ENCODE measurements at regions of chr11 and their contacts with region 1.

Region 1: DNA sequence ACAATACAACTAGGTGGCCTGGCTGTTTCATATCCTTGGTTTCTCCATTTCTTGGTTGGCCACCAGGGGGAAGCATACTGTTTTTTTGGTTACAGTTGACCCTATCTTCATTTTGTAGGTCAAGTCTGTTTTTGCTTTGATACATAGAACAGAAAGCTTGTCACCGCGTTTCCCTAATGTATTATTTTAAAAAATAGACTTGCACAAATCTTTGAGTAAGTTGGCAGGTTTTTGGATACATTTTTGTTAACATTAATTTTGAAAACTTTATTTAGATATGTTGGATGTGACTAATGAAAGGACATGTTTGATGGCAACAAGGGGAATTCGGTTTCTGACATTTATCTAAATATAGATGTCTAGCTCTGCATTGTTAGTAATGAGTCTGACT is 3.0 kb downstream of the NCR3LG1 start:
- DNase-seq: peak; percentile 57
- H3K4me3 ChIP-seq: peak overlapping the region in 1 of 3 experiments; percentile 43
- H3K27ac ChIP-seq: no peak overlapping the region
- H3K4me1 ChIP-seq: peaks cover 20% of the 10 kb centered on the region
- H3K27me3 ChIP-seq: no peaks in the 10 kb centered on the region
- CTCF ChIP-seq: peak; percentile 65 to 69

Region 2: DNA sequence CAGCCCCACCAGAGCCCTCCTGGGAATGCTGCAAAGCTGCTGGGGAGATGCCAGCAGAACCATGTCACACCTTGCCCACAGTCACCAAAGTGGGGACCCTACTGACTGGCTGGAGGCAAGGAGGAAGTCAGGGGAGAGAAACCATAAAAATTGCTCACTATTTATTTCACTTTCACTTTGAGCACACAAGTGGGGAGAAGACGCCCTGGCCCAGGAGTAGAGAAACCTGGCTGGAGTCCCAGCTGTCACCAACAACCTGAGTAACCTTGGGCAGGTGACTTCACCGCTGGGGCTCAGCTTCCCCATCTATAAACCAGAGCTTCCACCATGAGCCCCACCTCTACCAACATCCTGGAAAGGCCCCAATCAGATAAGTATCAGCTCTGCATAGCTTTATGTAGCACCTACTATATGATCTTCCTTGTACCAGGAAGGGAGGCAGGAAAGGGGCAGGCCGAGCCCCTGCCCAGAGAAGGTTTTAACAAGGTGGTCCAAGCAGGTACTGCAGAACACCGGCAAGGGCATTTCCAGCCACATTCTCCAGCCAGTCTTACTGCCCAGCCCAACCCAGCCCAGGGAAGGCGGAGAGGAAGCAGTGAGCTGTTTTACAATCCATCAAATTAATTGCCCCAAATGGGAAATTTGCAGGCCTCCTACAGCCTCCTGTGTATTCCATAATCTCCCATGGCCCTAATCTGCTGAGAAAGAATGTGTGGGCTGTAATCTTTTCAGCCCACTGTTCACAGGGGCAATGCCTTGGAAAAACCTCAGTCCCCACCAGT is 368.0 kb before region 1 on chr11:
- CTCF ChIA-PET with region 1: no interaction called
- dilution Hi-C with region 1: no loop called
- in situ Hi-C with region 1: no loop called
- intact Hi-C with region 1: no loop called
- DNase-seq: no peak
- H3K4me3 ChIP-seq: no peak overlapping the region
- H3K27ac ChIP-seq: no peak overlapping the region
- H3K4me1 ChIP-seq: peaks cover 11% of the 10 kb centered on the region
- H3K27me3 ChIP-seq: no peaks in the 10 kb centered on the region
- CTCF ChIP-seq: no peak

Region 3: DNA sequence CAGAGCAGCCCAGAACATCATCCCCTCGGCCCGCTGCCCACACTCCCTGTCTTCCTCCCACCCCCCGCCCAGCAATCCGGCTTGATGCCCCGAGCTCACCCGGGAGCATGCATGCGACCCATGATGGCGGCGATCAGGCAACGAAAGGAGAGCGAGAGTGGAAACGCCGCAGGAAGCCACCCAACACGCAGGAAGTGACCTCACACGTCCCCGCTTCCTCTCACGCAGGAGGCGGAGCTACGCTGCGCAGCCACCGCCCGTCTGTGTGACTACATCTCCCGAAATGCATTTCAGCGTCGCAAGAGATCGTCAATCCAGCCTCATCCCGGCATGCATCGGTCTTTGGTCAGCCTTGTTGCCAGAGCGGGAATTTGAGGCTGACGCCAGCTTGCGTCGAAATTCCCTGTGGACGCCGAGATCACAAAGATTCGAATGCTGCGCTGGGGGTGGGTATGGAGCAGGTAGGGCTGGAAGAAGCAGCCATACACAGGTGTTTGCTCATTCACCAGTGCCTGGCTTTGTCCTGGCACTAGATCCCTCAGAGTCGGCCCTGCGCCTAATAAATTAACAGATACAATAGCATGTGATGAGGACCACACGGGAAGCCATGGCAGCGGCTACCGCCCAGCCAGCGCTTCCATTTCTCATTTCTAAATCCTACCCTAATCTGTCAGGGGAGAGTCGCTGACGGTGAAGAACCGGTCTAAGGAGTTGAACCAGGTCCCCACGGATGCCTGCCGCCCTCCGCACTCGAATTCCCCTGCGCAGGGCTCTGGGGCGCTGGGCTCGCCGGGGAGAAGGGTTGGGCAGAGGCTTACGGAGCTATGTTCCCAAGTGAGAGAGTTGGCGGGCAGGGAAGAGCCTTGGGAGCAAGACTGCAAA is 276.8 kb before region 1 on chr11 and contains the start of gene RPS13:
- CTCF ChIA-PET with region 1: no interaction called
- dilution Hi-C with region 1: no loop called
- in situ Hi-C with region 1: no loop called
- intact Hi-C with region 1: loop called (anchors 10 kb)
- DNase-seq: peak; percentile 99
- H3K4me3 ChIP-seq: peak within 1 kb of the TSS; percentile 69 to 89 (median 81)
- H3K27ac ChIP-seq: peak within 1 kb of the TSS; percentile 86
- H3K4me1 ChIP-seq: peaks cover 25% of the 10 kb centered on the region
- H3K27me3 ChIP-seq: no peaks in the 10 kb centered on the region
- CTCF ChIP-seq: no peak
- total RNA-seq, gene RPS13: 475 to 878 TPM

Region 4: GRCh38 chr11:17230867-17231851 is 123.4 kb before region 1 on chr11:
- CTCF ChIA-PET with region 1: no interaction called
- dilution Hi-C with region 1: no loop called
- in situ Hi-C with region 1: loop called in 1 of 2 experiments (anchors 25 kb)
- intact Hi-C with region 1: loop called (anchors 1 kb)
- DNase-seq: no peak
- H3K4me3 ChIP-seq: no peak overlapping the region
- H3K27ac ChIP-seq: no peak overlapping the region
- H3K4me1 ChIP-seq: no peaks in the 10 kb centered on the region
- H3K27me3 ChIP-seq: no peaks in the 10 kb centered on the region
- CTCF ChIP-seq: no peak

Region 5: DNA sequence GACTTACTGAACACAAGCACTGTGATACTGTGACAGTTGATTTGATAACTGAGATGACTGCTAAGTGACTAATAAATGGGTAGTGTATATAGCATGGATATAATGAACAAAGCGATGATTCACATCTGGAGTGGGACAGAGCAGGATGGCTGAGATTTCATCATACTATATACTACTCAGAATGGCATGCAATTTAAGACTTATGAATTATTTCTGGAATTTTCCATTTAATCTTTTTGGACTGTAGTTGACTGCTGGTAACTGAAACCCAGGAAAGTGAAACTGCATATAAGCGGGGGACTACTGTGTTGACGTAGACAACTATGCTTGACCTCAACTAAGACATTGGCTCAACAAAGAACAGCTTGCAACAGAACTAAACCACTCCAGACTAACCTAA is 98.1 kb before region 1 on chr11:
- CTCF ChIA-PET with region 1: no interaction called
- dilution Hi-C with region 1: no loop called
- in situ Hi-C with region 1: no loop called
- intact Hi-C with region 1: loop called (anchors 5 kb)
- DNase-seq: peak; percentile 93
- H3K4me3 ChIP-seq: no peak overlapping the region
- H3K27ac ChIP-seq: peak overlapping the region; percentile 66
- H3K4me1 ChIP-seq: peaks cover 13% of the 10 kb centered on the region
- H3K27me3 ChIP-seq: no peaks in the 10 kb centered on the region
- CTCF ChIP-seq: no peak

Region 6: GRCh38 chr11:17276236-17277023 is 78.2 kb before region 1 on chr11 and contains the start of gene NUCB2:
- CTCF ChIA-PET with region 1: interaction called, 6 read pairs
- dilution Hi-C with region 1: no loop called
- in situ Hi-C with region 1: no loop called
- intact Hi-C with region 1: loop called (anchors 1 kb)
- DNase-seq: peak; percentile 95
- H3K4me3 ChIP-seq: peak within 1 kb of the TSS; percentile 81 to 91 (median 85)
- H3K27ac ChIP-seq: peak within 1 kb of the TSS; percentile 58
- H3K4me1 ChIP-seq: peaks cover 10% of the 10 kb centered on the region
- H3K27me3 ChIP-seq: no peaks in the 10 kb centered on the region
- CTCF ChIP-seq: no peak
- total RNA-seq, gene NUCB2: 26.3 to 66.5 TPM

Region 7: DNA sequence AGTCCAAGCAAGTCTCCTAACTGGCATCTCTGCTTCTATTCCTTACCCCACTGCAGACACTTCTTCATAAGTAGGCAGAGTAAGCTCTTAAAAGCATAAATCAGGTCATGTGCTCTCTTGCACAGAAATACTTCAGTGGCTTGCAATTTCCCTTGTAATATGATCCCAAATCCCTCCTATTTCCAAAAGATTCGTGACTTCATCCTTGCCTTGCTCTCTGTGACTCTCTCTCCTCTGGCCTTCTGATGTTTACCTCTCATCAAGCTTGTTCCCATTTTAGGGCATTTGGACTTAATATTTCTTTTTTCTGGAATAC is 40.4 kb before region 1 on chr11:
- CTCF ChIA-PET with region 1: interaction called, 10 read pairs
- dilution Hi-C with region 1: no loop called
- in situ Hi-C with region 1: no loop called
- intact Hi-C with region 1: loop called (anchors 5 kb)
- DNase-seq: peak; percentile 91
- H3K4me3 ChIP-seq: no peak overlapping the region
- H3K27ac ChIP-seq: peak overlapping the region; percentile 32
- H3K4me1 ChIP-seq: peaks cover 19% of the 10 kb centered on the region
- H3K27me3 ChIP-seq: no peaks in the 10 kb centered on the region
- CTCF ChIP-seq: no peak

Measured in mammary epithelial cell (primary cell).